Body of pancreas (tissue), 4 donors: ENCODE measurements at regions of chr17 and their contacts with region 1.

Region 1: DNA sequence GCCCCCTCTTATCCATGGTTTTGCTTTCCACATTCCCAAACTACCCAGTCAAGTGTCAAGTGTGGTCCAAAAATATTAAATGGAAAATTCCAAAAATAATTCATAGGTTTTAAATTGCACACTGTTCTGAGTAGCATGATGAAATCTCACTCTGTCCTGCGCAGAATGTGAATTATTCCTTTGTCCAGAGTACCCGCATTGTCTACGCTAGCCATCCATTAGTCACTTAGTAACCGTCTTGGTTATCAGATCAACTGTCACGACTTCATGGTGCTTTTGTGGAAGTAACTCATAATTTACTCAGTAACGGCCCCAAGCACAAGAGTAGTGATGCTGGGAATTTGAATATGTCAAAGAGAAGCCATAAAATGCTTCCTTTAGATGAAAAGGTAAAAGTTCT is 94.9 kb downstream of the SLC39A11 start:
- DNase-seq: no peak
- ATAC-seq: no peak
- H3K4me3 ChIP-seq: no peak overlapping the region
- H3K27ac ChIP-seq: no peak overlapping the region
- H3K4me1 ChIP-seq: no peaks in the 10 kb centered on the region
- H3K27me3 ChIP-seq: no peaks in the 10 kb centered on the region
- CTCF ChIP-seq: no peak
- POLR2A ChIP-seq: no peak

Region 2: GRCh38 chr17:72952220-72952984 is 45.2 kb before region 1 on chr17:
- intact Hi-C with region 1: no loop called
- DNase-seq: no peak
- ATAC-seq: no peak
- H3K4me3 ChIP-seq: no peak overlapping the region
- H3K27ac ChIP-seq: no peak overlapping the region
- H3K4me1 ChIP-seq: no peaks in the 10 kb centered on the region
- H3K27me3 ChIP-seq: no peaks in the 10 kb centered on the region
- CTCF ChIP-seq: no peak
- POLR2A ChIP-seq: no peak

Region 3: GRCh38 chr17:73166731-73167581 is 169.4 kb after region 1 on chr17:
- intact Hi-C with region 1: loop called (anchors 10 kb)
- DNase-seq: no peak
- ATAC-seq: no peak
- H3K4me3 ChIP-seq: no peak overlapping the region
- H3K27ac ChIP-seq: no peak overlapping the region
- H3K4me1 ChIP-seq: peaks cover 28% of the 10 kb centered on the region
- H3K27me3 ChIP-seq: peaks cover 0 to 9% of the 10 kb centered on the region in 2 donors
- CTCF ChIP-seq: no peak
- POLR2A ChIP-seq: no peak